B cell (primary cell): ENCODE measurements at regions of chr2 and their contacts with region 1.

Region 1: DNA sequence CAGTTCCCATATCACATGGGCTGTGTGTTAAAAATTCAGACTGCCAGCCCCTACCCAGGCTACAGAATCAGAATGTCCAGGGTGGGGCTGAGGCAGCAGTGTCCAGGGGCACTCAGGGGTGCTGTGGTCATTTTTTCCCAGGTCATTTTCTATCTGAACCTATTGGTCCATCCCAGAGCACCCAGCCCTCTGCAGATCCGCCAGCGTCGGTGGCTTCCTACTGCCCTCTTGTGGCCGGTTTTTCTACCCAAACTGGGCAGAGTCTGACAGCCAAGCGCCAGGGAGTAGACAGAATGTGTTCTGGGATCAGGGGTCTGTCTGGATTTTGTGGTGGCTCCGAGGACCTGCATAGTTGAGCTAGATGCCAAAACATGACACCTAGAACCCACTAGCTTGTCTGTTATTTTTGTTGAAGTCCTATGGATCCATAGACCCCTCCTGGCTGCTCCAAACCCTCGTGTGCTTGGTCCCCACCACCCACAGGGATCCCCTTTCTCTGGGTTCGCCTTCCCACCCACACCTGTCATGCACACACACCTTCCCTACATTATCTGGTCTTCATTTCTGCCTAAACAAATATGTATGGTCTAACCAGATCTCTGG is 34.1 kb upstream of the RMDN2 start:
- DNase-seq: peak; percentile 73
- ATAC-seq: peak; percentile 51
- H3K4me3 ChIP-seq: no peak overlapping the region
- H3K4me3 Mint-ChIP-seq: peak overlapping the region; percentile 23
- H3K27ac ChIP-seq: no peak overlapping the region
- H3K27ac Mint-ChIP-seq: no peak overlapping the region
- H3K4me1 ChIP-seq: peaks cover 28 to 31% of the 10 kb centered on the region in 2 donors
- H3K4me1 Mint-ChIP-seq: peaks cover 35% of the 10 kb centered on the region
- H3K27me3 ChIP-seq: no peaks in the 10 kb centered on the region
- H3K27me3 Mint-ChIP-seq: peaks cover 2% of the 10 kb centered on the region
- CTCF ChIP-seq: peak; percentile 84

Region 2: GRCh38 chr2:37925063-37925897 is 34.3 kb after region 1 on chr2 and contains the start of gene RMDN2:
- CTCF ChIA-PET with region 1: interaction called, 18 read pairs
- POLR2A ChIA-PET with region 1: interaction called, 3 read pairs
- intact Hi-C with region 1: loop called (anchors 2 kb)
- DNase-seq: peak; percentile 92
- ATAC-seq: peak; percentile 85
- H3K4me3 ChIP-seq: peak within 1 kb of the TSS; percentile 61 to 86 (median 81)
- H3K4me3 Mint-ChIP-seq: peak within 1 kb of the TSS; percentile 96
- H3K27ac ChIP-seq: peak within 1 kb of the TSS; percentile 84
- H3K27ac Mint-ChIP-seq: peak within 1 kb of the TSS; percentile 96
- H3K4me1 ChIP-seq: peaks cover 13 to 15% of the 10 kb centered on the region in 2 donors
- H3K4me1 Mint-ChIP-seq: peaks cover 34% of the 10 kb centered on the region
- H3K27me3 ChIP-seq: no peaks in the 10 kb centered on the region
- H3K27me3 Mint-ChIP-seq: peaks cover 7% of the 10 kb centered on the region
- CTCF ChIP-seq: peak; percentile 40
- total RNA-seq, gene RMDN2: 6.4 and 6.6 TPM in 2 replicates

Region 3: GRCh38 chr2:37934591-37935513 is 43.9 kb after region 1 on chr2:
- CTCF ChIA-PET with region 1: interaction called, 4 read pairs
- POLR2A ChIA-PET with region 1: no interaction called
- intact Hi-C with region 1: loop called (anchors 2 kb)
- DNase-seq: peak; percentile 53
- ATAC-seq: peak; percentile 83
- H3K4me3 ChIP-seq: peak overlapping the region in 3 of 5 experiments; percentile 29 to 60 (median 35)
- H3K4me3 Mint-ChIP-seq: peak overlapping the region; percentile 73
- H3K27ac ChIP-seq: peak overlapping the region; percentile 82 to 88
- H3K27ac Mint-ChIP-seq: peak overlapping the region; percentile 76
- H3K4me1 ChIP-seq: peaks cover 32 to 49% of the 10 kb centered on the region in 2 donors
- H3K4me1 Mint-ChIP-seq: peaks cover 73% of the 10 kb centered on the region
- H3K27me3 ChIP-seq: no peaks in the 10 kb centered on the region
- H3K27me3 Mint-ChIP-seq: no peaks in the 10 kb centered on the region
- CTCF ChIP-seq: no peak

Region 4: GRCh38 chr2:38076606-38077430 is 185.8 kb after region 1 on chr2:
- CTCF ChIA-PET with region 1: no interaction called
- POLR2A ChIA-PET with region 1: no interaction called
- intact Hi-C with region 1: no loop called
- DNase-seq: peak; percentile 30
- ATAC-seq: peak; percentile 10
- H3K4me3 ChIP-seq: peak overlapping the region in 4 of 5 experiments; percentile 30 to 59 (median 44)
- H3K4me3 Mint-ChIP-seq: peak overlapping the region; percentile 73
- H3K27ac ChIP-seq: no peak overlapping the region
- H3K27ac Mint-ChIP-seq: no peak overlapping the region
- H3K4me1 ChIP-seq: peaks cover 33 to 41% of the 10 kb centered on the region in 2 donors
- H3K4me1 Mint-ChIP-seq: peaks cover 21% of the 10 kb centered on the region
- H3K27me3 ChIP-seq: peaks cover 0 to 66% (median 35%) of the 10 kb centered on the region in 4 experiments
- H3K27me3 Mint-ChIP-seq: peaks cover 50% of the 10 kb centered on the region
- CTCF ChIP-seq: no peak

Region 5: GRCh38 chr2:38115216-38116032 is 224.4 kb after region 1 on chr2:
- CTCF ChIA-PET with region 1: interaction called, 4 read pairs
- POLR2A ChIA-PET with region 1: no interaction called
- intact Hi-C with region 1: loop called (anchors 5 kb)
- DNase-seq: peak; percentile 66
- ATAC-seq: peak; percentile 47
- H3K4me3 ChIP-seq: no peak overlapping the region
- H3K4me3 Mint-ChIP-seq: no peak overlapping the region
- H3K27ac ChIP-seq: no peak overlapping the region
- H3K27ac Mint-ChIP-seq: no peak overlapping the region
- H3K4me1 ChIP-seq: no peaks in the 10 kb centered on the region
- H3K4me1 Mint-ChIP-seq: no peaks in the 10 kb centered on the region
- H3K27me3 ChIP-seq: no peaks in the 10 kb centered on the region
- H3K27me3 Mint-ChIP-seq: peaks cover 29% of the 10 kb centered on the region
- CTCF ChIP-seq: peak; percentile 98

Region 6: DNA sequence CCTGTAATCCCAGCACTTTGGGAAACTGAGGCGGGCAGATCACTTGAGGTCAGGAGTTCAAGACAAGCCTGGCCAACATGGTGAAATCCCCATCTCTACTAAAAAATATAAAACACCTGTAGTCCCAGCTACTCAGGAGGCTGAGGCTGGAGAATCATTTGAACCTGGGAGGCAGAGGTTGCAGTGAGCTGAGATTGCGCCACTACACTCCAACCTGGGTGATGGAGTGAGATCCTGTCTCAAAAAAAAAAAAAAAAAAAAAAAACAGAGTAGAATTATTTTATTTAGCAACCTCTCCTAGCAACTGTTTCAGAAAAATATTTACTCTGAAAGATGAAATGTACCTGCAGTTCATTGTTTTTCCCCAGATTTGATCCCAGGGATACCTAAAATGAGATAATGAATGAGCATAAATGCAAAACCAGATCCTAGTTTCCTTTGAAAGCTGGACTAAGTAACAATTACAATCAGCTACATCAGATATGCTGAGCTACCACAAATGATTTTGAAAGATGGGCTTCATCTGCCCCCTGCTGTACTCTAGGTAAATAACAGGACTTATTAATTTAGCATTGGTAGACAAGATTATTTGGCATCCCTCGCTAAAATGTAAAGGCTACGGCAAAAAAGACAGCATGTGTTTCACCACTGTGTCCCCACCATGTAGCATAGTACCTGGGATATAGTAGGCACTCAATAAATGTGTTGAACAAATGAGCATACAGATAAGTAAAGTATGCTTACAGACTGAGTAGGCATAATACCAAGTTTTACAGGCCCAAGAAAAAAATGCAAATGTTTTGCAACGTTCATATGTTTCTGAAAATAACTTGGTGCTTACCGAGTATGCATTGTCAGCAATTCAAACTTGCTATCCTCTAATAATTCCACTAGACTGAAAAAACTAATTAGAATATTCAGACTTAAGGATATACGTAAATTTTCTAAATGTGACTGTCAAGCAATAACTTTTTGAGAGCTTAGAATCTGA is 383.6 kb after region 1 on chr2:
- CTCF ChIA-PET with region 1: no interaction called
- POLR2A ChIA-PET with region 1: interaction called, 8 read pairs
- intact Hi-C with region 1: loop called (anchors 5 kb)
- DNase-seq: peak; percentile 60
- ATAC-seq: peak; percentile 39
- H3K4me3 ChIP-seq: no peak overlapping the region
- H3K4me3 Mint-ChIP-seq: no peak overlapping the region
- H3K27ac ChIP-seq: no peak overlapping the region
- H3K27ac Mint-ChIP-seq: no peak overlapping the region
- H3K4me1 ChIP-seq: no peaks in the 10 kb centered on the region
- H3K4me1 Mint-ChIP-seq: peaks cover 4% of the 10 kb centered on the region
- H3K27me3 ChIP-seq: no peaks in the 10 kb centered on the region
- H3K27me3 Mint-ChIP-seq: no peaks in the 10 kb centered on the region
- CTCF ChIP-seq: peak; percentile 74

Region 7: DNA sequence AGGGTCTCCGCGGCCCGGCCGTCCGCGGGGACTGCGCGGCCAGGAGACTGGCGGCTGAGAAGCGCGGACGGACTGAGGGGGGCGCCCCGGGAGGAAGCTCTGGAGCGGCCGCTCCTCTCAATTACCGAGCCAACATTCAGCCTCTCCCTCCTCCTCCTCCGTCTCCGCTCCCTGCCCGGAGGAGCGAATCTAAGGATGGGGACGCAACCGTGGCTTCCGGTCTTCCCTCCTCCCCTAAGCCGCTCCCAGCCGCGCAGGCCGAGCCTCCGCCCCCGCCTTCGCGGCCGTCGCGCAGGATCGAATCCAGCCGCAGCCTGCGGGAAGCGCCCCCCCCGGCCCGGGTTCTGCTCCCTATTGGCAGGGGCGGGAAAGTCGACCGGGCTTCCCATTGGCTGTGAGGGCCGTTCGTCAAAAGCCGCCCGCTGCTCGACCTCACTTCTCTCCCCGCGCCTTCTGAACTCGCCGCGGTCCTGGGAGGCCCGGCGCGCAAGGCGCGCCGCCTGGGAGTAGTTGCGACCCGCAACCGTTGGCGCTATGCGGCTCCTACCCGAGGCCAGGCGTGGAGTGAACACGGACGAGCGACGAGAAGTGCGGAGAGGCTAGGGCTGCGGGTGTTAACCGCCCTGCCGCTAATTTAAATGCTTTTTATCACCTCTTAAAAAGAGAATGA is 711.9 kb after region 1 on chr2 and contains the start of gene HNRNPLL:
- CTCF ChIA-PET with region 1: no interaction called
- POLR2A ChIA-PET with region 1: interaction called, 10 read pairs
- intact Hi-C with region 1: no loop called
- DNase-seq: peak; percentile 89
- ATAC-seq: peak; percentile 86
- H3K4me3 ChIP-seq: peak within 1 kb of the TSS; percentile 71 to 83 (median 81)
- H3K4me3 Mint-ChIP-seq: peak within 1 kb of the TSS; percentile 93
- H3K27ac ChIP-seq: peak within 1 kb of the TSS in 1 of 2 donors; percentile 38
- H3K27ac Mint-ChIP-seq: peak within 1 kb of the TSS; percentile 86
- H3K4me1 ChIP-seq: peaks cover 13 to 27% of the 10 kb centered on the region in 2 donors
- H3K4me1 Mint-ChIP-seq: peaks cover 22% of the 10 kb centered on the region
- H3K27me3 ChIP-seq: peaks cover 0 to 52% (median 32%) of the 10 kb centered on the region in 4 experiments
- H3K27me3 Mint-ChIP-seq: peaks cover 35% of the 10 kb centered on the region
- CTCF ChIP-seq: no peak
- total RNA-seq, gene HNRNPLL: 5.8 and 6.7 TPM in 2 replicates